ENCODE measurements at regions of chr3 and their contacts with region 1.

Region 1: DNA sequence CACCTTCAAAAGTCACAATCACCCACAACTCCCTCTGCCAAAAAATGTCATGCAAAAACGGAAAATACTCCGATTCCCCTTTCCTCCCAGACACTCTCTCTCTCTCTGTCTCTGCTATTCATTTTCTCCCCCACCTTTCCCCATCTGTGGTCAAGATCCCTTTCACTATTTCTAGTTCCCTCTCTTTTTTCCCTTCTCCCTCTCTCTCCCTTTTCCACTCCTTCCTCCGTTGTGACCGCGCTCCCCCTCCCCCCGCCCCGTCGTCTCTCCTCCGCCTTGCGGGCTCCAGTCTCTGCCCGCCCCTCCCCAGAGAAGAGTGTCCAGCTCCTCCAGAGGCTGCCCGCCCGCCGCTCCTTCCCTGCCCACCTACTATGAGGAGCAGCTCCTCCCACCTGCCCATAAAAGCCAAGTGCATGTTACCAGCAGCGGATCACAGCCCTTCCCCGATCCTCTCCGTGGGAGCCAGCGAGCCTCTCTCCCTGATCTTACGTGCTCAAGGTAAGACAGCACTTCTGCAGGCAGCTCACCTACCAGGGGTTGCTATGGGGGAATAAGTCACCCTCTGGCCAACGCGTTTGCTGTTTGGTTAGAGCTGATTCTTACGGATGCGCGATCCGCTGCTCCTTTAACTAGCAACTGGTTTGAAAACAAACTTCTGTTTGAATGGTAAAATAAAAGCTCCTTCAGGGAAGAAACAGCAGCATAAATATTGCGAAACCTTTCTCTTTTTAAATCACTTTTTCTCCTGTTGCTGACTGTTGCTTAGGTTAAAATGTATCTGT is at the start of gene COL8A1:
- DNase-seq: peak; percentile 91 to 93
- ATAC-seq: peak; percentile 90
- H3K4me3 ChIP-seq: peak within 1 kb of the TSS; percentile 87 to 91
- H3K27ac ChIP-seq: peak within 1 kb of the TSS; percentile 86 to 89
- H3K4me1 ChIP-seq: peaks cover 3 to 6% of the 10 kb centered on the region in 2 donors
- H3K27me3 ChIP-seq: no peaks in the 10 kb centered on the region
- total RNA-seq, gene COL8A1: 264 to 514 TPM

Region 2: GRCh38 chr3:98901392-98902350 is 736.7 kb before region 1 on chr3 and contains the start of gene DCBLD2:
- intact Hi-C with region 1: loop called in 1 of 2 experiments (anchors 10 kb)
- DNase-seq: peak; percentile 98 to 99
- ATAC-seq: peak; percentile 98
- H3K4me3 ChIP-seq: peak within 1 kb of the TSS; percentile 65 to 80
- H3K27ac ChIP-seq: peak within 1 kb of the TSS; percentile 24 to 76
- H3K4me1 ChIP-seq: peaks cover 0 to 7% of the 10 kb centered on the region in 2 donors
- H3K27me3 ChIP-seq: no peaks in the 10 kb centered on the region
- total RNA-seq, gene DCBLD2: 27.5 to 36.3 TPM

Region 3: DNA sequence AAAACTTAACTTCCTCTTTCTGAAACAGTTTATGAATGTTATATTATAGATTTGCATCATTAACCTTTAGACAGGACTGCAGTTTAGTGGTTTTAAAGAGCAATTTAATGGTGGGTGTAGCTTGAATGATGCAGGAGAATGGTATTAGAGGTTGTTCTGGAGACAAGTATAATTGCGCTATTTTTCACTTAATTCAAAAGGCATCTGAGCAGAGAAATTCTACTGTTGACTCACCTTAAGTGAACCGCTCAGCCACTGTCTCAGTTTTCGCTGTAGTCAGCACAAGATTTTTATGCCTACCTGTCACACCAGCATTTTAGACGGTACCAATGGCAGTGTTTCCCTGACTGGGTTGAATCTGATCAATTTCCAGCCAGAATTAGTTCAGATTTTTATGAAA is 388.1 kb before region 1 on chr3:
- intact Hi-C with region 1: loop called in 1 of 2 experiments (anchors 10 kb)
- DNase-seq: no peak
- ATAC-seq: no peak
- H3K4me3 ChIP-seq: no peak overlapping the region
- H3K27ac ChIP-seq: peak overlapping the region in 1 of 2 donors; percentile 82
- H3K4me1 ChIP-seq: peaks cover 5 to 21% of the 10 kb centered on the region in 2 donors
- H3K27me3 ChIP-seq: no peaks in the 10 kb centered on the region

Region 4: DNA sequence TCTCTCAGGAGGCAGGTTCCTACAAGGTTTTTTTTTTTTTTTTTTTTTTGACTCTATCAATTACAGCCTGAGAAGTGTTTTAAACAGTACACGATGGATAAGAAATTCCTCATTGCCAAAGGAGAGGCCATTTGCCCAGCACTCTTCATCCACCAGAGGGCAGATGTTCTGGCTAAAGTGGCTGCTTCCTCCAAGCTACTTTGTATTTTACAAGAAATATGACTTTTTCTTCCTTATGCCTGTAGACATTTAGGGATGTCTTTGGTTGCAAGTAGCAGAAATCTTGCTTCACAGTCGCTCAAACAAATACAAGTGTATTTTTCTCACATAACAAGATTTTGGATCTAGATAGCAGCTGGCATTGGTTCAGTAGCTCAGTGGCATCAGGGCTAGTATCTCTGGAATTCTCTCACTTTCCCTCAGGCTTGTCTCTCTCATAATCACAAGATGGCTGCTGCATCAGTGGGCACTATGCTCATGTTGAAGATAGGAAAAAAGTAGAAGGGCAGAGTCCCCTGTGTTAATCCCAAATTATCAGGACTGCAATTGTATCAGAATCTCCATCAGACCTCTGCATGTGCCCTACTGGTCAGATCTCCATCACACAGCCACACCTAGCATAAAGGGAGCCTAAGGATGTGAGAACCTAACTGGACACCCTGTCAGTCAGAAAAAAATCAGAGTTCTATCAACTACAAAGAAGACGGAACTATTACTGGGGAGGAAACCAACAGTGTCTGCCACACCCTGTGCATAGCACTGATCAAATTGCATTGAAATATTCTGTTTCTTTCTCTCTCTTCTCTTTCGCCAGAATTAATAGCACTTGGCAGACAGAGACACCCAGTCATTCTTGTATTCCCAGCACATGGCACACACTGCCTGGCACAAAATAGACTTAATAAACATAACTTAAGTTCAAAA is 138.9 kb before region 1 on chr3:
- intact Hi-C with region 1: loop called (anchors 5 kb)
- DNase-seq: no peak
- ATAC-seq: peak; percentile 75
- H3K4me3 ChIP-seq: no peak overlapping the region
- H3K27ac ChIP-seq: peak overlapping the region; percentile 87 to 99
- H3K4me1 ChIP-seq: peaks cover 9 to 11% of the 10 kb centered on the region in 2 donors
- H3K27me3 ChIP-seq: no peaks in the 10 kb centered on the region

Region 5: GRCh38 chr3:99544786-99545281 is 93.5 kb before region 1 on chr3:
- intact Hi-C with region 1: loop called in 1 of 2 experiments (anchors 10 kb)
- DNase-seq: peak in 1 of 2 donors; percentile 44
- ATAC-seq: peak; percentile 24
- H3K4me3 ChIP-seq: no peak overlapping the region
- H3K27ac ChIP-seq: no peak overlapping the region
- H3K4me1 ChIP-seq: peaks cover 0 to 3% of the 10 kb centered on the region in 2 donors
- H3K27me3 ChIP-seq: no peaks in the 10 kb centered on the region

Region 6: GRCh38 chr3:99747915-99748314 is 109.6 kb after region 1 on chr3:
- intact Hi-C with region 1: loop called (anchors 5 kb)
- DNase-seq: no peak
- ATAC-seq: peak; percentile 70
- H3K4me3 ChIP-seq: no peak overlapping the region
- H3K27ac ChIP-seq: no peak overlapping the region
- H3K4me1 ChIP-seq: peaks cover 2 to 3% of the 10 kb centered on the region in 2 donors
- H3K27me3 ChIP-seq: no peaks in the 10 kb centered on the region